Gastrocnemius medialis (tissue), 4 donors: ENCODE measurements at regions of chr15 and their contacts with region 1.

Region 1: GRCh38 chr15:86624261-86625036 is 544.8 kb downstream of the AGBL1 start:
- DNase-seq: peak; percentile 89 to 96
- ATAC-seq: peak; percentile 100
- H3K4me3 ChIP-seq: peak overlapping the region in 3 of 4 donors; percentile 28 to 43 (median 31)
- H3K27ac ChIP-seq: peak overlapping the region; percentile 49 to 87 (median 74)
- H3K4me1 ChIP-seq: peaks cover 4 to 17% of the 10 kb centered on the region in 2 donors
- H3K27me3 ChIP-seq: no peaks in the 10 kb centered on the region
- CTCF ChIP-seq: peak; percentile 70 to 83 (median 73)
- POLR2A ChIP-seq: no peak

Region 2: DNA sequence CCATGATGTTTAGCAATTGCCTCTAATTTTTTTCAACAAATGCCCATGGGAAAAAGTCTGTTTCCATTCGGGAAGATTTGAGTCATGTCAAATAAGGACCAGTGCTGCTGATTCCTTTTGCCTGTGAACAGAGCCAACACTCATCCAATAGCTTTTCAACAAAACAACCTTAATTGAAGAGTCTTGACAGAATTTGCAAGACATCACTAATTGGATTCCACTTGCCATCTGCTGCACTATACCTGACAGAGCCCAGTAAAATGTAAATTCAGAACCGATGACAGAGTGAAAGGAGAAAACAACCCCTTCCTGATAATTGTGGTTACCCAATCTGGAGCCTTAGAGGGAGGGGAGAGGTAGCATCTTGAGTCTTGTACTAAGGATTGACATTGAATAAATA is 118.0 kb before region 1 on chr15:
- in situ Hi-C with region 1: no loop called
- intact Hi-C with region 1: no loop called
- DNase-seq: no peak
- ATAC-seq: no peak
- H3K4me3 ChIP-seq: no peak overlapping the region
- H3K27ac ChIP-seq: no peak overlapping the region
- H3K4me1 ChIP-seq: no peaks in the 10 kb centered on the region
- H3K27me3 ChIP-seq: no peaks in the 10 kb centered on the region
- CTCF ChIP-seq: no peak
- POLR2A ChIP-seq: no peak

Region 3: GRCh38 chr15:86756692-86757091 is 132.2 kb after region 1 on chr15:
- in situ Hi-C with region 1: no loop called
- intact Hi-C with region 1: loop called (anchors 10 kb)
- DNase-seq: no peak
- ATAC-seq: no peak
- H3K4me3 ChIP-seq: no peak overlapping the region
- H3K27ac ChIP-seq: no peak overlapping the region
- H3K4me1 ChIP-seq: peaks cover 14 to 28% of the 10 kb centered on the region in 2 donors
- H3K27me3 ChIP-seq: no peaks in the 10 kb centered on the region
- CTCF ChIP-seq: no peak
- POLR2A ChIP-seq: no peak

Region 4: GRCh38 chr15:86877171-86877646 is 252.8 kb after region 1 on chr15:
- in situ Hi-C with region 1: no loop called
- intact Hi-C with region 1: loop called (anchors 1 kb)
- DNase-seq: peak; percentile 15 to 34
- ATAC-seq: peak; percentile 73 to 78
- H3K4me3 ChIP-seq: no peak overlapping the region
- H3K27ac ChIP-seq: no peak overlapping the region
- H3K4me1 ChIP-seq: peaks cover 15 to 25% of the 10 kb centered on the region in 2 donors
- H3K27me3 ChIP-seq: no peaks in the 10 kb centered on the region
- CTCF ChIP-seq: peak; percentile 12 to 50 (median 37)
- POLR2A ChIP-seq: no peak

Region 5: DNA sequence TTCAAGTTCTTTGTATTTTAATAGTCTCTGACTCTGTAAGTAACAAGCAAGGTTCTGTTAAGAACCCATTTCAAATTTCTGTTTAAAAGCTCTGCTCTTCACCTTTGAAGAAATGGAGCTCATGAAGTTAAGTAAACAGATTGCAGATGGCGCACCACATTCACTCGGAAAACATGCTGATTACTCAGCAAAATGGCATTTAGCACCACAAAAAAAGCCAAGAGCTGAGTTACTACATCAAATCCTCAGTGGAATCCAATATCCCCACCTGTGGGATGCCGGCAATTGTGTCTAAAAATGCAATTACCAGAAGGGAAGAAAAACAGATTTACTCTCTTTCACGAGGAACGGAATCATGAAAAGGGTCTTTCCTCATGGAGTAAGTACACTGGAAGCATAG is 874.1 kb after region 1 on chr15:
- in situ Hi-C with region 1: no loop called
- intact Hi-C with region 1: loop called (anchors 5 kb)
- DNase-seq: no peak
- ATAC-seq: no peak
- H3K4me3 ChIP-seq: no peak overlapping the region
- H3K27ac ChIP-seq: peak overlapping the region; percentile 43 to 79 (median 73)
- H3K4me1 ChIP-seq: peaks cover 39 to 53% of the 10 kb centered on the region in 2 donors
- H3K27me3 ChIP-seq: no peaks in the 10 kb centered on the region
- CTCF ChIP-seq: no peak
- POLR2A ChIP-seq: no peak

Region 6: GRCh38 chr15:87604857-87605446 is 980.5 kb after region 1 on chr15:
- in situ Hi-C with region 1: loop called in 1 of 4 experiments (anchors 25 kb)
- intact Hi-C with region 1: loop called (anchors 5 kb)
- DNase-seq: no peak
- ATAC-seq: no peak
- H3K4me3 ChIP-seq: no peak overlapping the region
- H3K27ac ChIP-seq: no peak overlapping the region
- H3K4me1 ChIP-seq: peaks cover 0 to 4% of the 10 kb centered on the region in 2 donors
- H3K27me3 ChIP-seq: no peaks in the 10 kb centered on the region
- CTCF ChIP-seq: peak; percentile 14 to 49 (median 28)
- POLR2A ChIP-seq: no peak

Region 7: GRCh38 chr15:88246666-88247446 is 1622.4 kb after region 1 on chr15:
- in situ Hi-C with region 1: loop called in 1 of 4 experiments (anchors 25 kb)
- intact Hi-C with region 1: loop called (anchors 2 kb)
- DNase-seq: peak; percentile 41 to 59
- ATAC-seq: peak; percentile 60 to 80
- H3K4me3 ChIP-seq: no peak overlapping the region
- H3K27ac ChIP-seq: no peak overlapping the region
- H3K4me1 ChIP-seq: peaks cover 4 to 6% of the 10 kb centered on the region in 2 donors
- H3K27me3 ChIP-seq: peaks cover 0 to 4% (median 0%) of the 10 kb centered on the region in 3 donors
- CTCF ChIP-seq: peak; percentile 80 to 97 (median 90)
- POLR2A ChIP-seq: no peak

Region 8: DNA sequence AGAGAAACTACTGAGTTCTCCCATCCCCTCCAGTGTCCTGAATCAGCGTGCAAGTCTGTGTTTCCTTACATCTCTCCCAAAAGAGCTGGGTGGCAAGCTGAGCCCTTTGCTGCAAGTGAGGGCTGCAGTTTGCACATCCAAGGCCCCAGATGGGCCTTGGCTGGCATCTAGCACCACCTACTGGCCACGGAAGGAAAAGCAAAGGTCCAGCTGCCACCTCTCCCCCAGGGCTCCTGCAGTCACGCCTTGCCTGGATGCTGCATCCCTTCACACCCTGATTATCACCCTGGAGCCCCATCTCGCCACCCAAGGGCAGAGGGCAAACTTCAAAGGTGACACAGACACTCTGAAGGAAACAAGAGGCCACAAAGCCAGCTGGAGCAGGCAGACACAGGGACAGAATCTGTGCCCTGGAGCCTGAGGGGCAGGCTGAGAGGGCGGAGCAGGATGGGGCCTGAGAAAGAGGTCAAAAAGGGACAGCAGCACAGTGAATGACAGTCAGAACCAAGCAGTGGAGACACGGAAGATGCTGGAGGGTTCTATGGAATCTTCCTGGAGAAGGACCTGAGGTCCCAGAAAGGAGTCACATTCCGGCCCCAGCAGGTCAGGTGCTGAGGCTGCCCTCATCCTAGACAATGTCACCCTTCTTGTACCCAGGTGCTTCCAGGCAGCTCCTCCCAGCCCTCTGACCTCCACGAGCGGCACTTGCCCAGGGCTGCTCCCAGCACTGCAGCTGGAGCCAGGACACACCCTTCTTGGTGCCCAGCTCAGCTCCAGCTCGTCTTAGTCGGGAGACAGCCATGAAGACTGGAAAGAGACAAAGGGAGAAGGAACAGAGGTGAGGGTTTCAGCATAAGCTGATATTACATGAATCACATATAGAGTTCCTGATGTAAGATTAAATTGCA is 1650.4 kb after region 1 on chr15:
- in situ Hi-C with region 1: loop called in 1 of 4 experiments (anchors 25 kb)
- intact Hi-C with region 1: no loop called
- DNase-seq: peak in 1 of 2 donors; percentile 23
- ATAC-seq: peak; percentile 72 to 80
- H3K4me3 ChIP-seq: no peak overlapping the region
- H3K27ac ChIP-seq: no peak overlapping the region
- H3K4me1 ChIP-seq: no peaks in the 10 kb centered on the region
- H3K27me3 ChIP-seq: no peaks in the 10 kb centered on the region
- CTCF ChIP-seq: peak; percentile 46 to 85 (median 72)
- POLR2A ChIP-seq: no peak